Sciatic nerve (tissue), 2 donors: ENCODE measurements at regions of chr18 and their contacts with region 1.

Region 1: GRCh38 chr18:5439986-5440696 is 103.7 kb downstream of the EPB41L3 start:
- DNase-seq: no peak
- ATAC-seq: peak; percentile 55

Region 2: DNA sequence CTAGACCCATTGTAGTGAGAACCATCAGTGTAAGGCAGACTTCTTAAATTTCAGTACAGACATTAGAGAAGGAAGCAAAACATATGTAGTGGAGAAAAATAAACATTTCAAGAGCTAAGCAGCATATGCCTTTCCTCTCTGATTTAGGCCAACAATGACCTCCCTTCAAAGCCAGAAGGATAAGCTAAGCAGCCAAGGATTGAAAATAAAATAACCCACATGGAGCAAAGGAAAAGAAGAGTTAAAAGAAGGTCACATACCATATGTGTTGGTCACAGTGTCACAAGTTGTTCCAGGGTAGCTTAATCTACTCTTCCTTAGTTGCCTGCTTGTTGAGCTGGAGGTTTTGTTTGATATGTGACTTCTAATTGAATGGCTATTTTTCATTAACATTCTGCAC is 1693.0 kb after region 1 on chr18:
- intact Hi-C with region 1: loop called (anchors 10 kb)
- DNase-seq: no peak
- ATAC-seq: no peak